AG04450 (cell line): ENCODE measurements at regions of chr16 and their contacts with region 1.

Region 1: DNA sequence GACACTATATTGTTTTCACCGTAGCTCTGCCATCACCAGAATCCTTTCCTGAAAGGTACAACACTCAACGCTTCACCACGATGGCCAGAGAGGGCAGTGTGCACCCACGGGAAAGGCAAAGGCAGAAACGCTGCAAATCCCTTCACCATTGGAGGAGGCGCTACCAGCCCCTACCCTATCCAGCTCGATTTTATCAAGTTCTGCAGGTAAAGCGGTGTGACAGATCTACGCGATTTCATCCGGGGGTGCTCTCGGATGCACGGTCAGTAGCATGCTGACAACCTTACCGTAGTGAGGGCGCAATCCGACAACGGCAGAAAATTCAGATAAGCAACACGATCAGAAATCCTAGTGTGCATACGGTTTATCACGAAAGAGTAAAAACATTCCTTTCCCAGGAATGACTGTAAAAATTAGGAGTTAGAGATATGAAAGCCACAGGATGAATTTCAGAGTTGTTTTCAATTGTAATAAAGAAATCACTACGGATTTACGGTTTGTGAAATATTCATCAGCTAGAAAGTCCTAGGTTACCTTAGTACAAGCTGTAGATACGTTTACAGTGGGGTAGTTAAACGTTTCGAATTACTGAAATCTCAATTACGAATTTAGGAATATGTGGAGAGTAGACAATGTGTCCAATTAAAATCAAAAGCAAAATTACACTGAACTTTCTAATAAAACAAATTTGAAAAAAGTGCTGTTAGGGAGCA is 1.8 kb downstream of the NETO2 start:
- DNase-seq: peak; percentile 55
- H3K4me3 ChIP-seq: peak overlapping the region; percentile 68
- H3K27ac ChIP-seq: no peak overlapping the region
- H3K27me3 ChIP-seq: no peaks in the 10 kb centered on the region
- CTCF ChIP-seq: peak; percentile 99

Region 2: GRCh38 chr16:47084198-47084597 is 57.7 kb before region 1 on chr16:
- CTCF ChIA-PET with region 1: no interaction called
- POLR2A ChIA-PET with region 1: no interaction called
- DNase-seq: no peak
- H3K4me3 ChIP-seq: no peak overlapping the region
- H3K27ac ChIP-seq: no peak overlapping the region
- H3K27me3 ChIP-seq: no peaks in the 10 kb centered on the region
- CTCF ChIP-seq: no peak

Region 3: GRCh38 chr16:47109361-47109760 is 32.6 kb before region 1 on chr16:
- CTCF ChIA-PET with region 1: interaction called, 10 read pairs
- POLR2A ChIA-PET with region 1: no interaction called
- DNase-seq: no peak
- H3K4me3 ChIP-seq: no peak overlapping the region
- H3K27ac ChIP-seq: no peak overlapping the region
- H3K27me3 ChIP-seq: no peaks in the 10 kb centered on the region
- CTCF ChIP-seq: no peak

Region 4: GRCh38 chr16:47156680-47157215 is 14.8 kb after region 1 on chr16:
- CTCF ChIA-PET with region 1: interaction called, 34 read pairs
- POLR2A ChIA-PET with region 1: no interaction called
- DNase-seq: no peak
- H3K4me3 ChIP-seq: no peak overlapping the region
- H3K27ac ChIP-seq: no peak overlapping the region
- H3K27me3 ChIP-seq: no peaks in the 10 kb centered on the region
- CTCF ChIP-seq: no peak

Region 5: GRCh38 chr16:47213761-47214440 is 72.0 kb after region 1 on chr16:
- CTCF ChIA-PET with region 1: no interaction called
- POLR2A ChIA-PET with region 1: no interaction called
- DNase-seq: no peak
- H3K4me3 ChIP-seq: no peak overlapping the region
- H3K27ac ChIP-seq: no peak overlapping the region
- H3K27me3 ChIP-seq: no peaks in the 10 kb centered on the region
- CTCF ChIP-seq: no peak

Region 6: DNA sequence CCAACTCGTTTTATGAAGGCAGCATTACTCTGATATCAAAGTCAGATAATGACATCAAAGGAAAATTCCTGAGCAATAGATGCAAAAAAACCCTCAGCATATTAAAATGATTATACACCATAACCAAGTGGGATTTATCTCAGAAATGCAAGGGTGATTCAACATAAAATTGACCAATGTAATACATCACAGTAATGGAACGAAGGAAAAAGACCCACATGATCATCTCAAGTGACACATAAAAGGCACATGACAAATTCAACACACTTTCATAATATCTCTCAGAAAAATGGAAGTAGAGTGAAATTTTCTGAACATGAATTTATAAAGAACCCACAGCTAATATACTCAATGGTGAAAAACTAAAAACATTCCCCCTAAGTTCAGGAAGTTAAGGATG is 200.1 kb after region 1 on chr16:
- CTCF ChIA-PET with region 1: no interaction called
- POLR2A ChIA-PET with region 1: no interaction called
- DNase-seq: no peak
- H3K4me3 ChIP-seq: no peak overlapping the region
- H3K27ac ChIP-seq: no peak overlapping the region
- H3K27me3 ChIP-seq: no peaks in the 10 kb centered on the region
- CTCF ChIP-seq: no peak

Region 7: DNA sequence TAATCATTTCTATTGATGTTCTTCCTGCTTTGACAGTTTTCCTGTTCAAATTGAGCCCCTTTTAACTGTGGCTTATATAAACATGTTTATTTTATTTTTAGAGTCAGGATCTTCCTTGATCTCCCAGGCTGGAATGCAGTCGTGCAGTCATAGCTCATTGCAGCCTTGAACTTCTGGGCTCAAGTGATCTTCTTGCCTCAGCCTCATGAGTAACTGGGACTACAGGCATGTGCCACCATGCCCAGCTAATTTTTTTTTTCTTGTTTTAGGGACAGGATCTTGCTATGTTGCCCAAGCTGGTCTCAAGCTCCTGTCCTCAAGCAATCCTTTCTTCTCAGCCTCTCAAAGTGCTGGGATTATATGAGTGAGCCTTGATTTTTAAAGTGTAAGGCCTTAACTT is 333.9 kb after region 1 on chr16:
- CTCF ChIA-PET with region 1: interaction called, 13 read pairs
- POLR2A ChIA-PET with region 1: no interaction called
- DNase-seq: no peak
- H3K4me3 ChIP-seq: no peak overlapping the region
- H3K27ac ChIP-seq: no peak overlapping the region
- H3K27me3 ChIP-seq: no peaks in the 10 kb centered on the region
- CTCF ChIP-seq: no peak

Region 8: DNA sequence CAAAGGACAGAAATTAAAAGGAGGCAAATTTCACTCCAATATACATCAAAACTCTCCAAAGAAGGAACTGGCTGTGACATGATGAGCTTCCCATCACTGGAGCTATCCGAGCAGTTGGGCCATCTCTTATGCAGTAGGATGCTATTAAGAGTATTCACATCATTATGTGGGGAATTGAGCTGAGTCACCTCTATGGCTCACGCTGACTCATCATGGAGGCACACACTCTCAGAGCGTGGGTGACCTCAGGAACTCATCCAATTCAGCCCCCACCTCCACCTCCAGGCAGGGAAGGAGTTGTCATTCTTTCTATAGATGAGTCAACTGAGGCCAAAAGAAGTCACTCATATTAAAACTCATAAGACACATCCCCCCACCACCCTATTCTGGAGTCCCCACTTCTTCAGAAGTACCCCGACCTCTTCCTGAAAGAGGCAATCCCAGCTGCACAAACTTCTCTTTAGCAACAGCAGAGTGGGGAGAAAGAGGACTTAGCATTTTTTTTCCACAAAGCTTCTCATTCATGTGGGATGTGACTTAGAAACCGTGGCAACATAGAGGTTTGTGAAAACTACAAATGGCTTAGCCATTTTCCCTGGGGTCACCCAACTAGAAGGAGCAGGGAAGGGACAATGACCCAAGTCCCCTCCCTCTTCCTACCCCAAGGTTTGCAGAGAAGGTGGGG is 981.3 kb after region 1 on chr16:
- CTCF ChIA-PET with region 1: interaction called, 12 read pairs
- POLR2A ChIA-PET with region 1: interaction called, 4 read pairs
- DNase-seq: peak; percentile 96
- H3K4me3 ChIP-seq: no peak overlapping the region
- H3K27ac ChIP-seq: peak overlapping the region; percentile 97
- H3K27me3 ChIP-seq: no peaks in the 10 kb centered on the region
- CTCF ChIP-seq: no peak

Region 9: GRCh38 chr16:48164907-48165726 is 1023.2 kb after region 1 on chr16:
- CTCF ChIA-PET with region 1: interaction called, 99 read pairs
- POLR2A ChIA-PET with region 1: interaction called, 4 read pairs
- DNase-seq: peak; percentile 13
- H3K4me3 ChIP-seq: no peak overlapping the region
- H3K27ac ChIP-seq: no peak overlapping the region
- H3K27me3 ChIP-seq: no peaks in the 10 kb centered on the region
- CTCF ChIP-seq: peak; percentile 85